A673 (cell line): ENCODE measurements at regions of chr2 and their contacts with region 1.

Region 1: GRCh38 chr2:120277505-120278205 is 25.0 kb downstream of the RALB start:
- DNase-seq: no peak
- H3K4me3 ChIP-seq: no peak overlapping the region
- H3K27ac ChIP-seq: no peak overlapping the region
- H3K4me1 ChIP-seq: no peaks in the 10 kb centered on the region
- H3K27me3 ChIP-seq: no peaks in the 10 kb centered on the region
- CTCF ChIP-seq: no peak

Region 2: DNA sequence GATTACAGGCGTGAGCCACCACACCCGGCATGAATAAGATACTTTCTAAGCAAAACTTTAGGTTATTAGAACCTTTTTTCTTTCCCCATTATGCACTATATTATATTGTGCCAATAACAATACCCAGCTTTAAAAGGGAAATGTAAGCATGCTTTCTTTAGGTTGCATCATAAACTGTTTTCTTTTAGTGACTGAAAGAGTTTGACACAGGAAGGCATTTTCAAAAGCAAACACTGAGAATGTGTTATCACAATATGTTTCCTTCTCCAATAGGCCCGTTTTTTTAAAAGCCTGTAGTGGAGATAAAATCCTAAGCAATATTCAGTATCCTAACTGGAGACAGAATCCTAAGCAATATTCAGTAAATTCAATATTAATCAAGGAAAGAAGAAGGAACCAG is 281.5 kb before region 1 on chr2:
- CTCF ChIA-PET with region 1: no interaction called
- POLR2A ChIA-PET with region 1: no interaction called
- intact Hi-C with region 1: no loop called
- DNase-seq: no peak
- H3K4me3 ChIP-seq: no peak overlapping the region
- H3K27ac ChIP-seq: no peak overlapping the region
- H3K4me1 ChIP-seq: no peaks in the 10 kb centered on the region
- H3K27me3 ChIP-seq: no peaks in the 10 kb centered on the region
- CTCF ChIP-seq: no peak

Region 3: DNA sequence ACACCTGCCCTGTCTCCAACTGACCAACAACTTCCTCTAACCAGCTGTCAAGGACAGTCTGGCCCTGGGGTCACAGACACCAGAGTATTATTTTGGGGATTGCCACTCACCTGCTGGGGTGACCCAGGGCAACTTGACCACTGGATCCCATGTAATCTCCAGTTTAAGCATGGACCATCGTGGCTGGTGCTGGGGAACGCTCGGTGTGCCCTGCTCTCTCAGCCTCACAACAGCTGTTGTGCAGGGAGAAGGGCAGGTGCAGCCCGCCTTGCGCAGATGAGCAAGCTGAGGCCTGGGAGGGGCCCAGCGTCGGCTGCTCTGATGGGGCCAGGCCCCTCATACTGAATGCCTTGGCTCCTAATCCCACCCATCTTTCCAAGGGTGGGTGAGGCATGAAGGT is 47.3 kb after region 1 on chr2:
- CTCF ChIA-PET with region 1: no interaction called
- POLR2A ChIA-PET with region 1: interaction called, 12 read pairs
- intact Hi-C with region 1: no loop called
- DNase-seq: no peak
- H3K4me3 ChIP-seq: no peak overlapping the region
- H3K27ac ChIP-seq: no peak overlapping the region
- H3K4me1 ChIP-seq: no peaks in the 10 kb centered on the region
- H3K27me3 ChIP-seq: no peaks in the 10 kb centered on the region
- CTCF ChIP-seq: no peak